ENCODE measurements at regions of chr1 and their contacts with region 1.

Region 1: DNA sequence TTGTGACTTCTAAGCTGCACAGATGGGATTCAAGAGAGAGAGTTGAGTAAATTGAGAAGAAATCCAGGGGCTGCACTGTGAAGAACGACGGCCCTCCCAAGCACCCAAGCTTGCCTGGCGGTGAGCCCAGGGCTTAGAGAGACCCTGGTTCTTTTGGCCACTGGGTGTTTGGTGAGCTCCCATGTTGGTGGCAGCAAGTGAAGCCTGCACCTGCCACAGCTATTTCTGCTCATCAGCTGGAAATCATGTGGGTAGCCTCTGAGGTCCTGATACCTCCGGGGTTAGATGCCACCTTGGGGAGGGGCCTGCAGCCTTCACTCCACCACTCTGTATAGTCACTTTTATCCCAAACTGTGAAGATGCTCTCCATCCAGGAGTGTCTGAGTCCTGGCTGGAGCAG is 6.2 kb upstream of the BTG2 start:
- DNase-seq: peak; percentile 79
- ATAC-seq: peak; percentile 70
- H3K4me3 ChIP-seq: peak overlapping the region in 3 of 5 experiments; percentile 4 to 26 (median 5)
- H3K4me3 Mint-ChIP-seq: peak overlapping the region; percentile 68
- H3K27ac ChIP-seq: peak overlapping the region; percentile 76 to 87
- H3K27ac Mint-ChIP-seq: peak overlapping the region; percentile 93
- H3K4me1 ChIP-seq: peaks cover 87 to 100% of the 10 kb centered on the region in 2 donors
- H3K4me1 Mint-ChIP-seq: peaks cover 91% of the 10 kb centered on the region
- H3K27me3 ChIP-seq: no peaks in the 10 kb centered on the region
- H3K27me3 Mint-ChIP-seq: no peaks in the 10 kb centered on the region
- CTCF ChIP-seq: no peak

Region 2: DNA sequence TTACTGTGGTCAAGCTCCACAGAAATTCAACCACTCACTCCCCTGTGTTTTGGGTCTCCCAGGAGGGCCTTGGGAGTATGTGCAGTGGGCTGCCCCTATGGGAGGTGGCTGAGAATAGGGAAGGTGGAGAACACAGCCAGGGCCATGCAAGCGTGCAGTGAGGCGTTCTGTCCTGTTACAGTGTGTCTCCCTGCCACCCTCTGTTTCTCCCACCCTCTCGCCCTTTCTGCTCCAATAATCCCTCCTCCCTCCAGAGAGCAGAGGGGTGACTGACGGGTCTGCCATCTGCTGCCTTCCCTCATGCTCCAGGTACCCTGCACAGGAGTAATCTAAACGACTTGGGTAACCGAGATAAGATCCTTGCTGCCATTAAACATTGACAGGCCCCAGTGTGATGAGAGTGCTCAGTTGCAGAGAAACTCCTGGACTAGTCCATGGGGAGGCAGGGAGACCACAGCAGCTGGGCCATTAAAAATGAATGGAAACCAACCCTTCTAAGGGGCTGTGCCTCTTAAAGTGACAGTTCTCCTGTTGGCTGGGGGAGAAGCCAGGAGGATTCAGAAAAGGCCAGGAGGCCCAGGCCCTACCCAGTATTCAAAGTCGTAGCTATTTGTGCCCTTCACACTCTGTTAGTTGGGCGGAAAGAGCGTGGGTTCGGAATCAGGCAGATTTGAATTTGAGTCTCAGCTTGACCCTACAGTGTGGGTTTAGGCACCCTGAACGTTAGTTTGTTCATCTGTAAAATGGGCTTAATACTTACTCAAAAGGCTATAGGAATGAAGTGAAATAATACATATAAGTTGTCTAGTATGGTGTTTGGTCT is 16.2 kb before region 1 on chr1:
- CTCF ChIA-PET with region 1: interaction called, 13 read pairs
- POLR2A ChIA-PET with region 1: interaction called, 93 read pairs
- intact Hi-C with region 1: no loop called
- DNase-seq: no peak
- ATAC-seq: no peak
- H3K4me3 ChIP-seq: peak overlapping the region in 1 of 5 experiments; percentile 11
- H3K4me3 Mint-ChIP-seq: peak overlapping the region; percentile 79
- H3K27ac ChIP-seq: peak overlapping the region; percentile 48 to 71
- H3K27ac Mint-ChIP-seq: peak overlapping the region; percentile 95
- H3K4me1 ChIP-seq: peaks cover 66 to 74% of the 10 kb centered on the region in 2 donors
- H3K4me1 Mint-ChIP-seq: peaks cover 78% of the 10 kb centered on the region
- H3K27me3 ChIP-seq: no peaks in the 10 kb centered on the region
- H3K27me3 Mint-ChIP-seq: no peaks in the 10 kb centered on the region
- CTCF ChIP-seq: no peak